ENCODE measurements at regions of chr10 and their contacts with region 1.

Region 1: DNA sequence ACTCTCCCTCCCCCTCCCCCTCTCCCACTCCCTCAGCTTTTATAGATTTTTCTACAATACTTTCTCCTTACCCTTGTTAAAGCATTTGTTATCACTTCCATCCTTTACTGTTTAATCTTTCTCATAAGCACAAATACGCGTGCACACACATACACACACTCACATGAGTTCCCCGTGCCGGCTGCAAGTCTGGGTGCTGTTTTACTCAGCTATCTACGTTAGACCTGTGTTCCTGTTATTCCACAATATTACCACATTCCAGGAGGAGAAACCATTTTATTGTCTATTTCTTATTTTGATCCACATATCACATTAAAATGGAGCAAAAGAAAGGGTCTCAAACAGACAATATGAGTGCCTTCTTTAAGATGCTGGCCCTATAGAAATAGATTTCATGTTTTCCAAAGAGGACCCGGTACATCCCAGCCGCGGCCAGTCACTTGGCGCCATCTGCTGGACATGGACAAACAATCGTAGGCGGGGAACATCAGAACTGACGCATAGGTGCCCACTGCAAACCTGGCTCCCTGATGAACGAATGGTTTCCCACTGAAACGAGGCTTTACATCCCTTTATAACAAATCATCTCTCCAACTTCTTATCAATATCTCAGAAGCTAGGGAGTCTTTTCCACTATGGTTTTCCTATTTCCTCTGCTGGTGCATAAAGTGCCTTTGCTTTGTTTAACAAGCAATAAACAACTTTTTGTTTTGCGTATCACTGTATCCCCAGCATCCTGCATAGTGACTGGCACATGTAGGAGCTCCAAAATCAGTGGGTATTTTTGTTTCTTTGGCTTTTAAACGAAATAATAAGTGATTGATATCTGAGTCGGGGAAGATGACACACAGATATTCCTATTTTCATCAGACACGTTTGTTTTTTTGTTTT is 25.2 kb upstream of the OPTN start:
- DNase-seq: peak; percentile 90

Region 2: GRCh38 chr10:12605580-12606405 is 469.0 kb before region 1 on chr10:
- intact Hi-C with region 1: no loop called
- DNase-seq: peak; percentile 88

Region 3: GRCh38 chr10:12717981-12718707 is 356.7 kb before region 1 on chr10:
- intact Hi-C with region 1: loop called in 1 of 2 experiments (anchors 5 kb)
- DNase-seq: no peak

Region 4: DNA sequence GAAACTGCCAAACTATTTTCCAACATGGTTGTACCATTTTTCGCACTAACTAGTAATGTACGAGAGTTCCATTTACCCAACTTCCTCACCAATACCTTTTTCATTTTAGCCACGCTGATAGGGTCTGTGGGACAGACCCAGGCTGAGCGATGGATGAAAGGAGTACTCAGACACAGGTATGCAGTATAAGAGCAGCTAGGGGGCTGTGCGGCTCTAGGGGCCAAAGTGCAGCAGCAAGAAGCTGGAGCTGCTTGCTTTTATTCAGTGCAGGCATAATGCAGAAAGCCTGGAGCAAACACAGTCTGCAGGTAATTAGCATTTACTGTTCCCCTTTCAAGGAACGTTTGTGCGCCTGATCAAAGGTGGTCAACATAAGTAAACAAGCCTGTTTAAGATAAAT is 138.4 kb after region 1 on chr10:
- intact Hi-C with region 1: no loop called
- DNase-seq: no peak

Measured in posterior vena cava (tissue), 2 donors.